ENCODE measurements at regions of chr7 and their contacts with region 1.

Region 1: DNA sequence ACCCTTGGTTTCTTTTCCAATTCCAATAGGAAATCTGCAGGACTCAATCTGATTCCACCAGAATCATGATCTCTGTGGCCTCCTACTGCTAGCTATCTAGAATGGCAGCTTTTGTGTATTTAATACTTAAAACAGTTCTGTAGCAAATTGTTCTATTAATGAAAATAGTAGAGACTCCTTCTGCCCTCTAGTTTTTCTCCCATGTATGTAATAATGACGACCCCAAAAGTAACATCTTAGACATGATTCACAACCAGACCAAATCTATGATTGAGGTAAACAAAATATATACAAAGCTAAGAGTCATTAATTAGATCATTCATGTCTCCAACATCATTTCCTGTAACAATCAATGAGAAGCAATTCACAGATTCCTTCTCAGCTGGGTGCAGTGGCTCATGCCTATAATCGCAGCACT is 259.1 kb upstream of the MKLN1 start:
- DNase-seq: no peak
- H3K4me3 ChIP-seq: no peak overlapping the region
- H3K27ac ChIP-seq: peak overlapping the region in 1 of 4 donors; percentile 4
- H3K4me1 ChIP-seq: peaks cover 0 to 69% (median 34%) of the 10 kb centered on the region in 3 donors
- H3K27me3 ChIP-seq: no peaks in the 10 kb centered on the region
- CTCF ChIP-seq: peak in 2 of 6 experiments; percentile 18 to 23
- POLR2A ChIP-seq: no peak

Region 2: GRCh38 chr7:131424219-131424822 is 355.7 kb after region 1 on chr7:
- intact Hi-C with region 1: loop called (anchors 10 kb)
- DNase-seq: no peak
- H3K4me3 ChIP-seq: no peak overlapping the region
- H3K27ac ChIP-seq: peak overlapping the region in 1 of 4 donors; percentile 6
- H3K4me1 ChIP-seq: peaks cover 0 to 10% (median 0%) of the 10 kb centered on the region in 3 donors
- H3K27me3 ChIP-seq: no peaks in the 10 kb centered on the region
- CTCF ChIP-seq: peak in 5 of 6 experiments; percentile 51 to 68 (median 57)
- POLR2A ChIP-seq: no peak

Measured in esophagus squamous epithelium (tissue), 5 donors.